CD14-positive monocyte (primary cell): ENCODE measurements at regions of chr3 and their contacts with region 1.

Region 1: GRCh38 chr3:53269888-53270880 is 14.4 kb upstream of the TKT start:
- DNase-seq: peak; percentile 89 to 96 (median 95)
- H3K4me3 ChIP-seq: peak overlapping the region; percentile 10 to 71 (median 15)
- H3K4me3 Mint-ChIP-seq: peak overlapping the region; percentile 65 to 87
- H3K27ac ChIP-seq: peak overlapping the region; percentile 82 to 86
- H3K27ac Mint-ChIP-seq: peak overlapping the region; percentile 90 to 98 (median 95)
- H3K4me1 ChIP-seq: peaks cover 43 to 44% of the 10 kb centered on the region in 2 donors
- H3K4me1 Mint-ChIP-seq: peaks cover 41% of the 10 kb centered on the region
- H3K27me3 ChIP-seq: no peaks in the 10 kb centered on the region
- H3K27me3 Mint-ChIP-seq: peaks cover 0 to 2% (median 0%) of the 10 kb centered on the region in 3 donors
- CTCF ChIP-seq: no peak

Region 2: DNA sequence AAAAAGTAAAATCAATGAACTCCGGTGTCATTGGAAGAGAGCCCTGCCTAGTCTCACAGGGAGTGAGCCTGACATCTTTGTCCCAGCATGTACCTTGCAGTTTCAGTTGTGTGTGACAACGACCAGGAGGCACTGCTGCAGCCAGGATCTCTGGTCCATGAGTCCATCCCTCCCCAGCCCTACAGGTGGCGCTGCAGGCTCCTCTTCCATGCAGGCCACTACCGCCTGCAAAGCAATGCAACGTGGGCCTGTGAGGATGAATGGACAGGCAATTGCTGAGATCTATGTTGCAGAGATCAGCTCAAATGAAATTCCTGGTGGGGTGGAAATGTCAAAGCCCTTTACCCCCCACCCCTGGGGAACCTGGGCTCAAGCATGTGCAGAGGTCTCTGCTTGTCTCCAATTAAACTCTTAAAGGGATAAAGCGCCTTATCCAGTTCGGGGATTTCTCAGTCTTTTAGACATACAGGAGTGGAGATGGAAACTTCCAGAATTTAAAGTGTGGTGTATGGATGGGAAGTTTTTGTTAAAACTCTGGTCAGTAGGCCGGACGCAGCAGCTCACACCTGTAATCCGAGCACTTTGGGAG is 50.2 kb before region 1 on chr3:
- intact Hi-C with region 1: loop called in 1 of 2 experiments (anchors 10 kb)
- DNase-seq: peak; percentile 77 to 79 (median 78)
- H3K4me3 ChIP-seq: no peak overlapping the region
- H3K4me3 Mint-ChIP-seq: no peak overlapping the region
- H3K27ac ChIP-seq: no peak overlapping the region
- H3K27ac Mint-ChIP-seq: peak overlapping the region in 2 of 7 donors; percentile 64 to 75
- H3K4me1 ChIP-seq: peaks cover 2 to 16% of the 10 kb centered on the region in 2 donors
- H3K4me1 Mint-ChIP-seq: peaks cover 18% of the 10 kb centered on the region
- H3K27me3 ChIP-seq: no peaks in the 10 kb centered on the region
- H3K27me3 Mint-ChIP-seq: no peaks in the 10 kb centered on the region
- CTCF ChIP-seq: peak; percentile 95

Region 3: DNA sequence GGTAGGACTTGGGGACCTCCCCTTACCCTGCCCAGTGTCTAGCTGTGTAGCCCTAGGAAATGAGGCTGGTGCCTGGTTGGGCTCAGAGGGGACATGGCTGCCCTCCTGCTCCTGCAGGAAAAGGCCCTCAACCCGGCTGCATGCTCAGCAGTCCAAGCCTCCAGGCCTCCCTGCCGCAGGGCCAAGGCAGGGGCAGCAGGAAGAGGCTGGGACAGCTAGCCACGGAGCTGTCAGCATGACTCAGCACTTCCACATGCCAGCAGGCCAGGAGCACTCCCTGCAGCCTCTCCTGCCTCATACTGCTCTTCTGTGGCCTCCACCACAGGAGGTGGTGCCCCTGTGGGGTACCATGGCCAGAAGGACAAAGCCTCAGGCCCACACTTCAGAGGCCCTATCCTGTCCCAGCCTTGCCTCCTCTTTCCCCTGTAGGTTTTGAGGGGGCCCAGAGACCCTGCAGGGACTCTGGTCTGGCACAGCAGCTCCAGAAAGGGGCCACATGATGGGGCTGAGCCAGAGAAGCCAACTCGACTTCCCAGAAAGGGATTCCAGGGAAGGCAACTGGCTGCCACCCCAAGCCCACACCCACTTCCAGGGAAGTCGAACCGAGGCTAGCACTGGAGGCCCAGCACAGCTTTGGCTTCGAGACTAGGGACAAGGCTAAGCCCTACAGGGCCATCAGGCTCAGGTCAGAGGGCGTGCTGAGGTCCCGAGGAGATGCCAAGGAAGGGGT is 33.9 kb before region 1 on chr3:
- intact Hi-C with region 1: loop called in 1 of 2 experiments (anchors 5 kb)
- DNase-seq: peak; percentile 41 to 61 (median 61)
- H3K4me3 ChIP-seq: peak overlapping the region in 1 of 3 experiments; percentile 6
- H3K4me3 Mint-ChIP-seq: peak overlapping the region in 1 of 2 donors; percentile 42
- H3K27ac ChIP-seq: peak overlapping the region; percentile 49 to 69
- H3K27ac Mint-ChIP-seq: peak overlapping the region; percentile 76 to 90 (median 87)
- H3K4me1 ChIP-seq: peaks cover 56 to 57% of the 10 kb centered on the region in 2 donors
- H3K4me1 Mint-ChIP-seq: peaks cover 59% of the 10 kb centered on the region
- H3K27me3 ChIP-seq: no peaks in the 10 kb centered on the region
- H3K27me3 Mint-ChIP-seq: no peaks in the 10 kb centered on the region
- CTCF ChIP-seq: no peak